SK-N-SH (cell line): ENCODE measurements at regions of chr1 and their contacts with region 1.

Region 1: GRCh38 chr1:180482425-180483275 is 19.7 kb downstream of the ACBD6 start:
- DNase-seq: peak; percentile 37
- H3K4me3 ChIP-seq: peak overlapping the region; percentile 7 to 12; a peak in 2 of 4 replicates
- H3K27ac ChIP-seq: no peak overlapping the region
- H3K4me1 ChIP-seq: no peaks in the 10 kb centered on the region; a peak in 1 of 4 replicates
- H3K27me3 ChIP-seq: no peaks in the 10 kb centered on the region
- CTCF ChIP-seq: peak; percentile 86
- EP300 ChIP-seq: no peak
- RAD21 ChIP-seq: peak; percentile 62

Region 2: GRCh38 chr1:180462102-180462501 is 20.5 kb before region 1 on chr1:
- CTCF ChIA-PET with region 1: interaction called, 19 read pairs
- POLR2A ChIA-PET with region 1: no interaction called
- DNase-seq: no peak
- H3K4me3 ChIP-seq: no peak overlapping the region
- H3K27ac ChIP-seq: no peak overlapping the region
- H3K4me1 ChIP-seq: no peaks in the 10 kb centered on the region
- H3K27me3 ChIP-seq: no peaks in the 10 kb centered on the region
- CTCF ChIP-seq: no peak
- EP300 ChIP-seq: no peak
- RAD21 ChIP-seq: no peak

Region 3: DNA sequence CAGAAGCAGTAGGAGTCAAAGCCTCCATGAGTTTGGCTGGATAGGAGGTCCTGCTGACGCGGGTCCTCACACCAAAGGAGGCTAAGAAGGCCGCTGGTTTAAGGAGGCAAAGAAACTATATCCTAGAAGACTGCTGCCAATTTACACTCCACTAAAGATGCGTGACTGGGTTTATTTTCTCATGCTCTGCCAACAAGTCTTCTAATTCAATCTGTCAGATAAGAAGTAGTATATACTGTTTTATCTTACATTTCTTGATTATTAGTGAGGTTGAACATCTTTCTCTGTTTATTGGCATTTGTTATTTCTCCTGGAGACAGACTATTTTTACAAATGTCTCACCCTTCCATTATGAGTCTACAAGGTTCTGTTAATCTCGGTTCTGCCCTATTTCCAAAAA is 14.3 kb before region 1 on chr1:
- CTCF ChIA-PET with region 1: interaction called, 19 read pairs
- POLR2A ChIA-PET with region 1: no interaction called
- DNase-seq: no peak
- H3K4me3 ChIP-seq: no peak overlapping the region
- H3K27ac ChIP-seq: no peak overlapping the region
- H3K4me1 ChIP-seq: no peaks in the 10 kb centered on the region
- H3K27me3 ChIP-seq: no peaks in the 10 kb centered on the region
- CTCF ChIP-seq: no peak
- EP300 ChIP-seq: no peak
- RAD21 ChIP-seq: no peak

Region 4: DNA sequence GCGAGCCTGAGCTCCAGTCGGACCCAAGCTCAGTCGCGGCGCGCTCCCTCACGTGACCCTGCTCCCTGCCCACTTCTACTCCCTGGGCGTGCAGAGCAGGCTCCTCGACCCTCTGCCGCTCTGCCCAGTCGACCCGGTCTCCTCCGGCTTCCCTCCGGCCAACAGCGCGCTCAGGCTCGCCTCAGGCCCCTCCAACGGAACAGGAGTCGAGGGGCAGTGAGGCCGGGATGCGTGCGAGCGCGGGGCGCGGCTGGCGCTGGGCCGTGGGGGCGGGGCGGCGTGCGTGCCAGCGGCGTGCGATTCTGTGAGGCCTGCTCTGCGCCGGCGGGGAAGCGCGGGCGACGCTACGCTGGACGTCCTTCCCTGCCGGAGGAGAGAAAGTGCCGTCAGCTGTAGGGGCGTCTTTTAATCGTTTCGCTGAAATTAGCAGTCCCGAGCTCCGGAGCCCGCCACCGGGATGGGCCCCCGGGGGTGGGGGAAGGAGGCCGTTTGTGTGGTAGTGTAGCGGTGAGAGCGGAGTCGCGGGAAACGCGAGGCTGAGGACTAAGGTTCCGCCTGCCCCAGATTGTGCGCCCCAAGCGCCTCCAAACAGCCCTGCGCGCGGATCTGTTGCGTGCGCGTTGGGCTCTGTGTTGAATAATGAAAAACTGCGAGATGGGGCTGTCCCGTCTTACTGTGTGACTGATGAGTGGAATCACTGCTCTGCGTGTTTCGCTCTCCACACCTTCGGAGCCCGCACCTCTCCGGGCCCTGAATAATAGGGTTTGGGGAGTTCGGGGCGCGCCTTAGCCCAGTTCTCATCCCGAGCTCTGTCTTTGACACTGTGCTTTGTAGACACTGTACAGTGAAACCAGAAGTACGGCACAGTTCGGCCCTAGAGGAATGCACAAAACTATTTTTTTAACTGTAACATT is 20.0 kb after region 1 on chr1 and contains the start of gene ACBD6:
- CTCF ChIA-PET with region 1: interaction called, 12 read pairs
- POLR2A ChIA-PET with region 1: no interaction called
- DNase-seq: peak; percentile 93
- H3K4me3 ChIP-seq: peak within 1 kb of the TSS; percentile 71 to 80
- H3K27ac ChIP-seq: peak within 1 kb of the TSS; percentile 86 to 97
- H3K4me1 ChIP-seq: peaks cover 10 to 11% of the 10 kb centered on the region in 2 experiments
- H3K27me3 ChIP-seq: no peaks in the 10 kb centered on the region
- CTCF ChIP-seq: peak; percentile 21
- EP300 ChIP-seq: peak in 1 of 2 experiments; percentile 34; a peak in 1 of 4 replicates
- RAD21 ChIP-seq: no peak
- polyA plus RNA-seq, gene ACBD6: 60.9 and 65.2 TPM in 2 replicates

Region 5: DNA sequence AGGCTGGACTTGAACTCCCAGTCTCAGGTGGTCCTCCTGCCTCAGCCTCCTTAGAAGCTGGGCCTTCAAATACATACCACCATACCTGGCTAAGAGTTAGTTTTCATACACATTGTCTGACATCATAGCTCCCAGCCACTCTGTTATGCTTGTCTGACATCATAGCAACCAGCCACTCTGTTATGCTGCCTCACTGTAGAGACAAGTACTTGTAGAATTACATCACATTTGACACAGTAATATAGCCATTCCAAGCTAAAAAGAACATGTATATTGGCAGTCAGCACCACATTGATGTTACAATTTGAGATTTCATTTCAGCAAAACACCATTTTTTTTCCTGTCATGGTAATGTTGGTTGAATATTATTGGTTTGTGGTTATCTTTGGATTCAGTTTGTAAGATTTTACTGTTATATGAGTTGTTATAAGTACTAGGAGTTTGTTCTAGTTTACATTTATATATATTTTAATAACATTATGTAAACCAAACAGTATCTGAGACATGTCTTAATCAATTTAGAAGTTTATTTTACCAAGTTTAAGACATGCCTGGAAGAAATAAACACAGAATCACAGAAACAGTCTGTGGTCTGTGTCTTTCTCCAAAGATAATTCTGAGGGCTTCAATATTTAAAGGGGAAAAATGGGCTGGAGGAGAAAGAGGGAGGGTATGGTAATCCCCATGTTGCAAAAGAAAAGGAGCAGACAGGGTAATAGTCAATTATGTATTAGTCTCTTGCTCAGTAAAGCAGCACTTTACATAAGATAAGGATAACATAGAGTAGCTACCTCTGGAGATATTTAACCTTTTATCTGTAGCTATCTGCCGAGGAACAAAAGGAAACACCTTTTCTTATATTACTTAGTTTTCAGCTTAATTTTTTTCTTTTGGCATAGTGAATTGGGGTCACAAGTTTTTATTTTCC is 192.2 kb after region 1 on chr1:
- CTCF ChIA-PET with region 1: no interaction called
- POLR2A ChIA-PET with region 1: no interaction called
- DNase-seq: no peak
- H3K4me3 ChIP-seq: no peak overlapping the region
- H3K27ac ChIP-seq: no peak overlapping the region
- H3K4me1 ChIP-seq: peaks cover 0 to 7% of the 10 kb centered on the region in 2 experiments; a peak in 1 of 4 replicates
- H3K27me3 ChIP-seq: no peaks in the 10 kb centered on the region
- CTCF ChIP-seq: no peak
- EP300 ChIP-seq: no peak
- RAD21 ChIP-seq: no peak